GM10248 (cell line): ENCODE measurements at regions of chr10 and their contacts with region 1.

Region 1: DNA sequence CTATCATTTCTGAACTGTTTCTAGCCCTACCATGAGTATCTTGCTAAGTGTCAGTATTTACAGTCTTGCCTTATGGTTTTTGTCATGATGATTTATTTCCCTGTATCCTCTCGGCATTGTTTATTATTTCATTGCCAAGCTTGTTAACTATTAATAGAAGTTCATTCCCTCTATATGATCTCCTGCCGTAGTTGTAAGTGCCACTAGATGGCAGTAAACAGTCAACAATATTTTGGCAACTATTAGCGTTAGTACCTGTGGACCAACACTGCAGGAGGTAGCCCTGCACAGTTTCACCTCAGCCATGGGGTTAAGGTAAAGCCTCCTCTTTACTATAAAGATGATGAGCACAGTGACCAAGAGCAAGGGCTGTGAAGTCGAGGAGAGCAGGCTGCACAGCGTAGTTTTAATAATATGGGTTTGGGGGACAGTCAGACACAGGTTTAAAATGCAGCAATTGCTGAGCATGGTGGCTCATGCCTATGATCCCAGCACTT is 26.1 kb upstream of the CCNJ start:
- DNase-seq: peak; percentile 67
- CTCF ChIP-seq: peak; percentile 78

Region 2: DNA sequence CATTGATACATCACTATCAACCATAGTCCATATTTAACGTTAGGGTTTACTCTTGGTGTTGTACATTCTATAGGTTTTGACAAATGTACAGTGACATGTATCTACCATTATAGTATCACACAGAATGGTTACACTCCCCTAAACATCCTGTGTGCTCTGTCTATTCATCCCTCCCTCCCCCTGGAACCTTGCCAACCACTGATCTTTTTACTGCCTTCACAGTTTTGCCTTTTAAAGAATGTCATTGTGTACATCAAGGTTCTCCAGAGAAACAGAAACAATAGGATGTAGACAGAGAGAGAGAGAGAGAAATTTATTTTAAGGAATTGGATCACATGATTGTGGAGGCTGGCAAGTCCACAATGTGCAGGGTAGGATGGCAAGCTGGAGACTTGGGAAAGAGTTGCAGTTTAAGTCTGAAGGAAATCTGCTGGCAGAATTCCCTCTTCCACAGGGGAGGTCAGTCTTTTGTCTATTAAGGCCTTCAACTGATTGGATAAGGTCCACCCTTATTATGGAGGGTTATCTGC is 18.9 kb before region 1 on chr10:
- CTCF ChIA-PET with region 1: interaction called, 59 read pairs
- POLR2A ChIA-PET with region 1: no interaction called
- DNase-seq: no peak
- CTCF ChIP-seq: no peak

Region 3: DNA sequence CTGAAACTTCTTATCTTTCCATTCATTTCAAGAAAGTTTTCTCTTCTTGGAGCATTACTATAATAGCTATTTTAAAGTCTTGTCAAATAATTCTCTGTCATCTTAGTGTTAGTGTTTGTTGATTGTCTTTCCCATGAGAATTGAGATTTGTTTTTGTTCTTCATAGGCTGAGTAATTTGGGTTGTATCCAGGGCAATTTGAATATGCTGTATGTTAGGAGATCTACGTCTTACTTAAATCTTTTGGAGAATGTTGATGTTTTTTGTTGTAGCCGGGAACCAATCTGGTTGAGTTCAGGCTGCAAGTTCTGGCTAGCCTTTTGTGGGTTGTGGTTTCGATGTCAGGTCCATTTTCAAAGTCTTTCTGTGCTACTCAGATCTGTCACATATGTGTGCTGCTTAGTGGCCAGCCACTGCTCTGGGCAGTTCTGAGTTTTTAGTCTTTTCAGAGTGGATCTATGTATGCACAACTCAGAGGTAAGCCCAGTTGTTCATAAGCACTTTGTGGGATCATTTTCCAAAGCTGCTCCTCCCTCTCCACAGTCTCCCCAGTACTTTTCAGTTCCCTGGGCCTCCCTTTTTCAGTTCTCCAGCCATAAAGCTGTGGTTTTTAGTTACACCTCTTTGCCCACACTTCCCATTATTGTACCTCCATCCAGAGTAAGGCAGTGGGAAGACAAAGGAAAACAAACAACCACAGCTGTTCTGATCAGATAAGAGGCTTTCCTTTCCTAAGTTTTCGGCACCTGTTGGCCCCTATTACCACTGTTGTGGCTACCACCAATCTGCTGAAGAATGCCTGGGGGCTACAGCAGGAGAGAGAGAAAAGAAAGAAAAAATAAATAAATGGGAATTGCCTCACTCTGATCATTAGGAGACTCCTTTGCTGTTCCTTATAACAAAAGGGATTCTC is 21.5 kb after region 1 on chr10:
- CTCF ChIA-PET with region 1: interaction called, 11 read pairs
- POLR2A ChIA-PET with region 1: no interaction called
- DNase-seq: no peak
- CTCF ChIP-seq: no peak